Panc1 (cell line): ENCODE measurements at regions of chr5 and their contacts with region 1.

Region 1: DNA sequence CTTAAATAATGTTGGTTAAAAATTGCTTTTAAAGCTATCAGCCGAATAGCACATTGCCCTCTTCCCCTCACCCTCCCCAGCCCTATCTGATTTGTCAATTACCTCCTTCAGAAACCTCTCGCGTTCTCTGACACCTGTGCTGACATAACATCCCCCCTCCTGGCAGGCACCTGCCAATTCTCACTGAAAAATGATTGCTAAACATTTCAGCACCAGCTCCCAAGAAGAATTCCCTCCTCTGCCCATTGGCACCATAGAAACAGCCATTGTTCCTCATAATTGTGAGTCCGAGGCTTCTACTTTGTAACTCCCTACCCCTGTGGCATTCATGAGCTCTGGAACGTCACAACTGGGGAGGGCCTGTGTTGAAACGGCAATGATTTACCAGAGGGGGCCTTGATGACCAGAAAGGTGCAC is 20.2 kb downstream of the CDH6 start:
- DNase-seq: no peak
- ATAC-seq: no peak
- H3K4me3 ChIP-seq: no peak overlapping the region
- H3K27ac ChIP-seq: no peak overlapping the region
- H3K4me1 ChIP-seq: no peaks in the 10 kb centered on the region
- H3K27me3 ChIP-seq: no peaks in the 10 kb centered on the region; the same call in 1 of the 2 replicates
- CTCF ChIP-seq: no peak

Region 2: GRCh38 chr5:31317642-31318041 is 103.9 kb after region 1 on chr5:
- CTCF ChIA-PET with region 1: no interaction called
- POLR2A ChIA-PET with region 1: no interaction called
- in situ Hi-C with region 1: no loop called
- intact Hi-C with region 1: no loop called
- DNase-seq: no peak
- ATAC-seq: no peak
- H3K4me3 ChIP-seq: no peak overlapping the region
- H3K27ac ChIP-seq: no peak overlapping the region
- H3K4me1 ChIP-seq: no peaks in the 10 kb centered on the region
- H3K27me3 ChIP-seq: no peaks in the 10 kb centered on the region
- CTCF ChIP-seq: no peak

Region 3: DNA sequence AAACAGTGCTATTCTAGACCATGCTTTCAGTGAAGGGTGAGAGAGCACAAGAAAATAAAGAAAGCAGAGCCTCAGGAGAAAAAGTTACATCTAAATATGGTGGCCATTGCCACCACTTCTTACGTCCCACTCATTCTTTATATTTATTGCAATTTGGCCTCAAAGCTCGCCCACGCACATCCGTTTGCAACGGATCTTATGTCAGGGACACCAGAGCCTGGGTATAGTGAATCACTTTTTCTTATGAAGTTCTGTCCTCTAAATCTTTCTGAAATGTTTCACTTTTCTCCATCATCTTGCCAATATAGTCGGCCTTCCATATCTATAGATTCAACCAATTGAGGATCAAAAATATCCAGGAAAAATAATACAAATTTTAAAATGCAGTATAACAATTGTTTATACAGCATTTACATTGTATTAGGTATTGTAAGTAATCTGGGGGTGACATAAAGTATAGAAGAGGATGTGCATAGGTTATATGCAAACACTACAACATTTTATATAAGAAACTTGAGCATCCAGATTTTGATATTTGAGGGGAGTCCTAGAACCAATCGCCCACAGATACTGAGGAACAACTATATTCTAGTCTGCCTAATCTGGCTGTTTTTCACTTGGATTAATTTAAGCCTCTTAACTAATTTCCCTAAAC is 925.3 kb after region 1 on chr5:
- CTCF ChIA-PET with region 1: no interaction called
- POLR2A ChIA-PET with region 1: interaction called, 10 read pairs
- in situ Hi-C with region 1: no loop called
- intact Hi-C with region 1: no loop called
- DNase-seq: no peak
- ATAC-seq: no peak
- H3K4me3 ChIP-seq: no peak overlapping the region
- H3K27ac ChIP-seq: no peak overlapping the region
- H3K4me1 ChIP-seq: no peaks in the 10 kb centered on the region
- H3K27me3 ChIP-seq: no peaks in the 10 kb centered on the region
- CTCF ChIP-seq: no peak